ENCODE measurements at regions of chr14 and their contacts with region 1.

Region 1: GRCh38 chr14:20632682-20633428 is 8.6 kb downstream of the OR6S1 start:
- DNase-seq: peak; percentile 53
- H3K4me3 Mint-ChIP-seq: peak overlapping the region; percentile 85
- H3K27ac Mint-ChIP-seq: peak overlapping the region; percentile 91
- H3K4me1 Mint-ChIP-seq: peaks cover 56% of the 10 kb centered on the region
- H3K27me3 Mint-ChIP-seq: peaks cover 76% of the 10 kb centered on the region

Region 2: DNA sequence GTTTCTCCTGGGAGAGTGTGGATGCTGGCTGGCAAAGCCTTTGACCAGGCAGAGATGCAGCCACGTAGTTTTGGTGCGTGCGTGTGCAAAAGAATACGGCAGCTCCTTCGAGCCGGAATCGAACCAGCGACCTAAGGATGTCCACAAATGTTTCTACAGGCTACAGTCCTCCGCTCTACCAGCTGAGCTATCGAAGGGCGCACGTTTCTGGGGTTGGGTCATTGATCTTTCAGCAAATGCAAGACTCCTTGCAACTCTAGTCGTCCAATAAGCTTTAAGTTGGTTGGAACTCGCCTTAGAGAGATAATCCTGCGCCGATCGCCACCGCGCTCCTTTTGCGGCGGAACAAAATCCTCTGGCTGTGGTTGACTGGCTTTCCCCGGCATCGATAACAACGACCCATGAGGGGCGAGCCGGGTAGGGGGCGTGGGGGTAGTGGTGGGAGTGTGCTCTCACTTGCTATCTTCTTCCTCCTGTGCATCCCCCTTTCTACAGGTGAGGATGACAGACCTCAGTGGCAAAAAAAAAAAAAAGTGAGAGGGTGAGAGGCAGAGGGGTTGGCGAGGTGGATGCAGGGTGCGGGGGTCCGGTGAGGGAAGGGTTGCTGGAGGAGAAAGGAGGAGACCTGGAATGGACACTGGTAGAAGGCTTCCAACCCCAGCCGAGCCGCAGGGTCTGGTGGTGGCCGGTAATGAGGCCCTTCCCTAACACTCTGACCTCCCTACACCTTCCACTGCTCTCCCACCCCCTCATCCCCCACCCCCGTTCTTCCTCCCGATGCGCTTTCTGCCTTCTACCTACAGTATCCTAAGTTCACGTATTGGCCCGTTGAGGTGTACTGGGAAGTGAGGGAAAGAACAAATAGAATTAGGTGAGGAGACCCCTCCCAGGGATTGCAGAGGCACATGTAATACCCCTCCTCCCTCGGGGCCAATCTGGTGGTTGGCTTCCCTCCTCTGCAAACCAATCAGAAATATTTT is 20.4 kb after region 1 on chr14:
- intact Hi-C with region 1: loop called (anchors 1 kb)
- DNase-seq: peak; percentile 37
- H3K4me3 Mint-ChIP-seq: peak overlapping the region; percentile 63
- H3K27ac Mint-ChIP-seq: no peak overlapping the region
- H3K4me1 Mint-ChIP-seq: peaks cover 24% of the 10 kb centered on the region
- H3K27me3 Mint-ChIP-seq: peaks cover 72% of the 10 kb centered on the region